ENCODE measurements at regions of chr17 and their contacts with region 1.

Region 1: DNA sequence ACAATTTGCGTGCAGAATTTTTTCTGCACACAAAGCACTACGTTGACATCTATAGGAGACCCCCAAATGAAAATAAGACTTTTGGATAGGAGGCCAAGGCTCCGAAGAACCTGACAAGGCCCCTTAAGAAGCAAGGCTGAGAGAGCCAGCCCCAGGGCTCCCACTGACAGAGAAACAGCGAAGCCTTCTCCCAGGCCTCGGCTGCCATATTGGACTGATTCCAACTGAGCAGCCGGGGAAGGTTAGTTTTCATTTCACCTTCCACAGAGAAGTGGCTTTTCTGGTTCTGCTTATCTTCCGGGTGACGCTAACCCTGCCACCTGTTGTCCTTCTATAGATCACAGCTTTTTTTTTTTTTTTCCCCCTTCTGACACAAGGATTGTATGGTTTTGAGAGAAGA is 356.7 kb downstream of the SOX9 start:
- DNase-seq: no peak
- H3K4me3 ChIP-seq: no peak overlapping the region
- H3K27ac ChIP-seq: no peak overlapping the region
- H3K4me1 ChIP-seq: no peaks in the 10 kb centered on the region
- H3K27me3 ChIP-seq: no peaks in the 10 kb centered on the region
- CTCF ChIP-seq: no peak

Region 2: DNA sequence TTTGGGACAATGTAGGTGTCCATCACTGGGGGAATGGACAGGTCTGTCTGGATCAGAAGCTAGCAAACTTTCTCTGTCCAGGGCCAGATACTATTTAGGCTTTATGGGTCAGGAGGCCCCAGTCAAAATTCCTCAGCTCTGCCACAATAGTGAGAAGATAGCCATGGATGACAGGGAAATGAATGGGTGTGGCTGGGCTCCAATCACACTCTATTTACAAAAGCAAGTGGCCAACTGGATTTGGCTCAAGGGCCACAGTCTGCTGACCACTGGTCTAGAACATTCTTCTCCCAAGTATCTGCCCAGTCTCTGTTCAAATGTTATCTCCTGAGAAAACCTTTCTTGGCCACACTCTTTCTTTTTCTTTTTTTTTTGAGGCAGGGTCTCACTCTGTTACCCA is 16.8 kb before region 1 on chr17:
- CTCF ChIA-PET with region 1: no interaction called
- POLR2A ChIA-PET with region 1: interaction called, 12 read pairs
- intact Hi-C with region 1: no loop called
- DNase-seq: no peak
- H3K4me3 ChIP-seq: no peak overlapping the region
- H3K27ac ChIP-seq: no peak overlapping the region
- H3K4me1 ChIP-seq: peaks cover 5% of the 10 kb centered on the region
- H3K27me3 ChIP-seq: no peaks in the 10 kb centered on the region
- CTCF ChIP-seq: no peak

Measured in A673 (cell line).